Upper lobe of right lung (tissue), 1 donor: ENCODE measurements at regions of chr5 and their contacts with region 1.

Region 1: GRCh38 chr5:79560771-79561524 is 47.0 kb upstream of the HOMER1 start:
- DNase-seq: no peak
- ATAC-seq: peak; percentile 28
- H3K4me3 ChIP-seq: no peak overlapping the region
- H3K27ac ChIP-seq: no peak overlapping the region
- H3K4me1 ChIP-seq: no peaks in the 10 kb centered on the region
- H3K27me3 ChIP-seq: no peaks in the 10 kb centered on the region
- CTCF ChIP-seq: no peak

Region 2: GRCh38 chr5:79518718-79519117 is 42.2 kb before region 1 on chr5:
- intact Hi-C with region 1: no loop called
- DNase-seq: no peak
- ATAC-seq: no peak
- H3K4me3 ChIP-seq: no peak overlapping the region
- H3K27ac ChIP-seq: no peak overlapping the region
- H3K4me1 ChIP-seq: no peaks in the 10 kb centered on the region
- H3K27me3 ChIP-seq: no peaks in the 10 kb centered on the region
- CTCF ChIP-seq: no peak

Region 3: DNA sequence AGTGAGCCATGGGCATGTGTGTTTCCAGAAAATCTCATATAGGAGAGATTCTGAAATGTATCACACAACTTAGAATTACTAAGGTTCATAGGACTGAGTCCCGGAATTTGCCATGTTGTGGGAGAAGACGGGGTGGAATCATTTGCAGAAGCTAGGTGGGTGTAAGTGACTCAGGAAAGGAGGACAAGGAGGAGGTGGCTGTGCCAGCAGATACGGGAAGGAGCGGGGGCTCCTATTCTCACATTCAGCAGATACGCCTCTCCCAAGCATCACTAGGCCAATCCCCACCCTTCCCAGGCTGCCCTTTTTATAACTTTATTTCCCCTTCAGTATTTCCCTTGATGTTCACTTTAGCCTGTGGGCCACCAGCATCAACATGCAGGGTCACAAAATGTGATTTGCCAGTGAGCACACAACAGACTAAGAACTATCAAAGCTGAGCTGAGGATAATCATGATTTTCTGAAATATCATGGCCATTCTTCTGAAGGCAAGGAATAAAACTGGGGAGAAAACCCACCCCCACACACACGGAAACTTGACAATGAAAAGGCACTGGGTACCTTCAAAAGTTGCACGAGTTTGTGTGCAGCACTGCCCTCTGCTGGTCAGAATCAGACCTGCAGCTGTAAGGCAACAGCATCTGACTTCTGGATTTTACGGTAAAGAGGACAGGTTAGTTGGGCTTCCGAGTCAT is 296.9 kb after region 1 on chr5:
- intact Hi-C with region 1: loop called (anchors 10 kb)
- DNase-seq: peak; percentile 77
- ATAC-seq: peak; percentile 88
- H3K4me3 ChIP-seq: no peak overlapping the region
- H3K27ac ChIP-seq: no peak overlapping the region
- H3K4me1 ChIP-seq: no peaks in the 10 kb centered on the region
- H3K27me3 ChIP-seq: peaks cover 5% of the 10 kb centered on the region
- CTCF ChIP-seq: peak; percentile 91